BJ (cell line): ENCODE measurements at regions of chr6 and their contacts with region 1.

Region 1: DNA sequence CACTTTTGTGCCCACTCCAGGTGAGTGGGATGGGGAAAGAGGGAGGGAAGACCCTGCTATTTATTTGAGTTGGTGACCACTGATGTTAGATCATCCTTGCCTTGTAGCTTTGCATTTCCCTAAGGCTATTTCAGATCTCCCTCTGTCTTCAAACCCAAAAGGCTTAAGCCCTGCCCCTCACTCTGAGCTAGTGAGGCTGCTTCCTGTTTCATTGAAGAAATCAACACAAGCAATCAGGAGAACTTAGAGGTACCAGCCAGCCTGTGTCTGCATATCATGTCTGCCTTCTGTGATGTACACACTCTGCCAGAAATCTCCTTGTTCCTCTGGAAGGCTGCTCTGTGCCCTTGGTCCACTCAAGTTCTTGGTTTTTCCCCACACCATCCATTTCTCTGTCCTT is 135.3 kb downstream of the ARID1B start:
- DNase-seq: no peak
- H3K4me3 ChIP-seq: no peak overlapping the region
- H3K27me3 ChIP-seq: no peaks in the 10 kb centered on the region
- CTCF ChIP-seq: no peak

Region 2: DNA sequence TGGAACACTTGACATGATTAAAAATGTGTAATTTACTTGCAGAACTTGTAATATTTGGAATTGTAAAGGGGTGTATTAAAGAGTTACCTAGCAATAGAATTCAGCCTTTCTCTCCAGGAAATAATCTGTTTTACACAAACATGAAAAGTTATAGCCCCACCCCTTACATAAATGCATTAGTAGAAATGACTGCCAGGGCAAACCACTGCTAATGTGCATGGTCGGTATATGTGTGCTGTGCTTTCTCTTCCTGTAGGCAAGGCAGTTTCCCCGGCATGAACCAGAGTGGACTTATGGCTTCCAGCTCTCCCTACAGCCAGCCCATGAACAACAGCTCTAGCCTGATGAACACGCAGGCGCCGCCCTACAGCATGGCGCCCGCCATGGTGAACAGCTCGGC is 254.4 kb after region 1 on chr6:
- CTCF ChIA-PET with region 1: no interaction called
- POLR2A ChIA-PET with region 1: interaction called, 16 read pairs
- DNase-seq: no peak
- H3K4me3 ChIP-seq: no peak overlapping the region
- H3K27me3 ChIP-seq: no peaks in the 10 kb centered on the region
- CTCF ChIP-seq: no peak